CD8-positive, alpha-beta T cell (primary cell): ENCODE measurements at regions of chr17 and their contacts with region 1.

Region 1: DNA sequence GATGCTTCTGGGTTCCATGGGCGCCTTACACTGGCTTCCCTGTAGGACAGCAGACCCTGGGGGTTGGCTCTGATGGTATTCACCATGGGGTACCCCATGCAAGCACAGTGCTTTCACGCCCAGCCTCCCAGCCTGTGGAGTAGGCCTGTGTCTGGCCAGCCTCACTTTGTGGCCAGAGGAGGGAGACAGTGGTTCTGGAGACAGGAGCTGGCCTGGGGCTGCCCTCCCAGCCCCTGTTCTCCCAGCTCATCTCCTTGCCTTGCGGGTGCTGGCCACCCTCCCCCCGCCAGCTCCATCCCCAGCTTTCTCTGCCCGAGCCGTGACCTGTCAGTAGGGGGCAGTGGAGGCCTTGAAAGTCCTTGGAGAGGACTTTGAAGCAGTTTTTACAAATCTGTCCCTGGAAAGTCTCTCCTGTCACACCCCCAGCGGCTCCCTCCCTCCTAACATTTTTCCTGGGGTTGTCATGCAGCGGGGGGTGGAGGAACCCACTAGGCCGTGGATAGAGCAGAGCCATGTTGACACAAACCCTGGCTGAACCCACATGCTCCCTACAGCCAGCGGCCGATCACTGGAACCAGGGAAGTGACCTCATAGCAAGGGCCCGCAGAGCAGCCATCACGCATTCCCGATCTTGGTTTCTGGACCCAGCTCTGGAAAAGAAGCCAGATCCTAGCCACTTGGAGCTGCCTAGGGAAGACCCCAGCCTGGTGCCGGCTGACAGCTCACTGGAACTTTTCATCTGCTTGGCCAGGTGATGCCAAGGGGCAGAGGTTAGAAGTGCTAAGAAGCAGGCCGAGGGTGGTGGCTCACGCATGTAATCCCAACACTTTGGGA is 289.4 kb downstream of the SEC14L1 start:
- DNase-seq: peak; percentile 73 to 90 (median 85)
- ATAC-seq: peak; percentile 32
- H3K4me3 ChIP-seq: no peak overlapping the region
- H3K4me3 Mint-ChIP-seq: peak overlapping the region; percentile 32
- H3K27ac ChIP-seq: peak overlapping the region in 1 of 2 experiments; percentile 14
- H3K27ac Mint-ChIP-seq: peak overlapping the region; percentile 97
- H3K4me1 ChIP-seq: peaks cover 84% of the 10 kb centered on the region
- H3K4me1 Mint-ChIP-seq: peaks cover 85% of the 10 kb centered on the region
- H3K27me3 ChIP-seq: no peaks in the 10 kb centered on the region
- H3K27me3 Mint-ChIP-seq: no peaks in the 10 kb centered on the region
- CTCF ChIP-seq: peak; percentile 73

Region 2: DNA sequence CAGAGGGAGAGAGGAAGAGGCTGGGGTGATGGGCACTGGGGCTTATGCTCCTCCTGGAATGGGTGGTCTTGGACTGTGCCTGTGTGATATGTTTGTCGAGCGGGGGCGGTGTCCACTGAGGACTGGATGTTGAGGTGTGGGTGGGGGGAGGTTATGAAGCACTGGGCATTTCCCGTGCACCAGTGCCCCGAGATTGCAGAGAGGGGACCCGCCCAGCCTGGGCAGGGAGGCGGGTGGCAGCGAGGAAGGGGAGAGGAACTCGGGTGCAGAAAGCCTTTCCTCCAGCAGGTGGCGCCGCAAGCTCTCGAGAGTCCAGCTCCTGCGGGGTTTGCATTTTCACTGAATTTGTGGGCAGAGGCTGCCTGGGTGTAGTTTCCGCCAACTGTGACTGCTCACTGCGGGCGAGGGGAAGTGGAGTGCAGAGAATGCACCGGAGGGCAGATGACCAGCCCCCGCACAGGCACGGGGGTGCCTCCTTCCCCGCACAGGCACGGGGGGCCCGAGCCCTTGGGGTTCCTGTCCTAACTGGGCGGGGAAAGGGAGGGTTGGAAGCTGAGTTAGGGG is 98.8 kb before region 1 on chr17:
- CTCF ChIA-PET with region 1: interaction called, 74 read pairs
- POLR2A ChIA-PET with region 1: interaction called, 17 read pairs
- intact Hi-C with region 1: loop called (anchors 1 kb)
- DNase-seq: peak; percentile 90 to 99 (median 96)
- ATAC-seq: peak; percentile 79
- H3K4me3 ChIP-seq: peak overlapping the region; percentile 10 to 42
- H3K4me3 Mint-ChIP-seq: peak overlapping the region; percentile 79
- H3K27ac ChIP-seq: peak overlapping the region; percentile 32 to 56
- H3K27ac Mint-ChIP-seq: peak overlapping the region; percentile 90
- H3K4me1 ChIP-seq: peaks cover 41% of the 10 kb centered on the region
- H3K4me1 Mint-ChIP-seq: peaks cover 46% of the 10 kb centered on the region
- H3K27me3 ChIP-seq: no peaks in the 10 kb centered on the region
- H3K27me3 Mint-ChIP-seq: no peaks in the 10 kb centered on the region
- CTCF ChIP-seq: peak; percentile 87

Region 3: GRCh38 chr17:77391668-77392375 is 38.3 kb before region 1 on chr17:
- CTCF ChIA-PET with region 1: interaction called, 28 read pairs
- POLR2A ChIA-PET with region 1: interaction called, 11 read pairs
- intact Hi-C with region 1: no loop called
- DNase-seq: peak in 6 of 9 experiments; percentile 34 to 78 (median 54)
- ATAC-seq: peak; percentile 46
- H3K4me3 ChIP-seq: no peak overlapping the region
- H3K4me3 Mint-ChIP-seq: peak overlapping the region; percentile 54
- H3K27ac ChIP-seq: peak overlapping the region in 1 of 2 experiments; percentile 7
- H3K27ac Mint-ChIP-seq: peak overlapping the region; percentile 84
- H3K4me1 ChIP-seq: peaks cover 83% of the 10 kb centered on the region
- H3K4me1 Mint-ChIP-seq: peaks cover 79% of the 10 kb centered on the region
- H3K27me3 ChIP-seq: no peaks in the 10 kb centered on the region
- H3K27me3 Mint-ChIP-seq: no peaks in the 10 kb centered on the region
- CTCF ChIP-seq: no peak

Region 4: GRCh38 chr17:77451245-77451893 is 21.2 kb after region 1 on chr17:
- CTCF ChIA-PET with region 1: interaction called, 142 read pairs
- POLR2A ChIA-PET with region 1: interaction called, 242 read pairs
- intact Hi-C with region 1: loop called (anchors 1 kb)
- DNase-seq: peak; percentile 36 to 86 (median 73)
- ATAC-seq: peak; percentile 25
- H3K4me3 ChIP-seq: peak overlapping the region; percentile 93 to 99
- H3K4me3 Mint-ChIP-seq: peak overlapping the region; percentile 94
- H3K27ac ChIP-seq: peak overlapping the region; percentile 80 to 86
- H3K27ac Mint-ChIP-seq: peak overlapping the region; percentile 100
- H3K4me1 ChIP-seq: peaks cover 54% of the 10 kb centered on the region
- H3K4me1 Mint-ChIP-seq: peaks cover 50% of the 10 kb centered on the region
- H3K27me3 ChIP-seq: no peaks in the 10 kb centered on the region
- H3K27me3 Mint-ChIP-seq: no peaks in the 10 kb centered on the region
- CTCF ChIP-seq: no peak

Region 5: GRCh38 chr17:77471984-77472461 is 41.9 kb after region 1 on chr17:
- CTCF ChIA-PET with region 1: interaction called, 32 read pairs
- POLR2A ChIA-PET with region 1: interaction called, 18 read pairs
- intact Hi-C with region 1: loop called (anchors 2 to 5 kb)
- DNase-seq: no peak
- ATAC-seq: no peak
- H3K4me3 ChIP-seq: peak overlapping the region; percentile 5 to 33
- H3K4me3 Mint-ChIP-seq: peak overlapping the region; percentile 75
- H3K27ac ChIP-seq: peak overlapping the region; percentile 11 to 62
- H3K27ac Mint-ChIP-seq: peak overlapping the region; percentile 99
- H3K4me1 ChIP-seq: peaks cover 100% of the 10 kb centered on the region
- H3K4me1 Mint-ChIP-seq: peaks cover 95% of the 10 kb centered on the region
- H3K27me3 ChIP-seq: no peaks in the 10 kb centered on the region
- H3K27me3 Mint-ChIP-seq: no peaks in the 10 kb centered on the region
- CTCF ChIP-seq: no peak

Region 6: GRCh38 chr17:77494664-77495435 is 64.7 kb after region 1 on chr17:
- CTCF ChIA-PET with region 1: interaction called, 175 read pairs
- POLR2A ChIA-PET with region 1: interaction called, 31 read pairs
- intact Hi-C with region 1: loop called (anchors 1 kb)
- DNase-seq: peak; percentile 52 to 89 (median 75)
- ATAC-seq: peak; percentile 75
- H3K4me3 ChIP-seq: no peak overlapping the region
- H3K4me3 Mint-ChIP-seq: no peak overlapping the region
- H3K27ac ChIP-seq: peak overlapping the region in 1 of 2 experiments; percentile 28
- H3K27ac Mint-ChIP-seq: peak overlapping the region; percentile 89
- H3K4me1 ChIP-seq: peaks cover 31% of the 10 kb centered on the region
- H3K4me1 Mint-ChIP-seq: peaks cover 25% of the 10 kb centered on the region
- H3K27me3 ChIP-seq: no peaks in the 10 kb centered on the region
- H3K27me3 Mint-ChIP-seq: no peaks in the 10 kb centered on the region
- CTCF ChIP-seq: peak; percentile 99